ENCODE measurements at regions of chr4 and their contacts with region 1.

Region 1: DNA sequence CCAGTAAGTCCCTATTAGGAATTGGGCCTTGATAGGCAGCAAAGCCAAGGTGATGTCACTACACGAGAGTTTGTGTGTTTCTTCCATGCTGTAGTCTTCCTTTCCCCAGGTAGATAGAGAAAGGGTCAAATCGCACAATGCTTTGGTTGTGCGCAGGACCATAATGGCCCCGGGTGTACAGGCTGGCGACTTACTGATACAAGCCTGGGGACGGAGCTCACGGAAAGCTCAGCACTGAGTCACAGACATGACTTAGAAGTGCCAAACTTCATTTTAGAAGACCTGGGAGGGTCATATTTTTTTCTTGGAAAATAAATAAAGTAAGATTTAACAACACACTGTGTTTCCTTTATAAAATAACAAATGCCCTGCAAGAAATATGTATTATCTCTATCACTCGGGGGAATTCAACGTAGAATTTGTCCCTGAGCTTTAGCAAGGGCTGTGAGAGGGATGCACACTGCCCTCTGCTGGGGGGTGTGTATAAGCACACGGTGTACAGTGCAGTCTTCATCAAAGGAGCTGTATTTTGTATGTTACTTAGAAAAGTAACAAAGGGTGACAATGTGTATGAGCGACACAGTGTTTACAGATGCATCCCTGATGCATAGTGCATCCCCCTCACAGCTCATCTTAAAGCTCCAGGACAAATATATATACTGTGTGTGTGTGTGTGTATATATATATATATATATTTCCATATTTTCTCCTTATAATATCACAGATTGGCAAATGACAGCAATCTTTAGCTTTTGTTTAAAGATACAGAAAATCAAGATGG is 254.5 kb upstream of the VEGFC start:
- DNase-seq: peak; percentile 76
- H3K4me3 ChIP-seq: no peak overlapping the region
- H3K27ac ChIP-seq: no peak overlapping the region
- H3K4me1 ChIP-seq: peaks cover 3% of the 10 kb centered on the region
- H3K27me3 ChIP-seq: no peaks in the 10 kb centered on the region
- CTCF ChIP-seq: peak; percentile 77 to 90
- POLR2A ChIP-seq: no peak

Region 2: GRCh38 chr4:176635372-176636261 is 411.6 kb before region 1 on chr4:
- CTCF ChIA-PET with region 1: interaction called, 11 read pairs
- POLR2A ChIA-PET with region 1: no interaction called
- dilution Hi-C with region 1: no loop called
- intact Hi-C with region 1: loop called (anchors 10 kb)
- DNase-seq: peak; percentile 68
- H3K4me3 ChIP-seq: no peak overlapping the region
- H3K27ac ChIP-seq: peak overlapping the region; percentile 20
- H3K4me1 ChIP-seq: peaks cover 7% of the 10 kb centered on the region
- H3K27me3 ChIP-seq: no peaks in the 10 kb centered on the region
- CTCF ChIP-seq: no peak
- POLR2A ChIP-seq: no peak

Region 3: GRCh38 chr4:176778491-176778890 is 268.8 kb before region 1 on chr4:
- CTCF ChIA-PET with region 1: interaction called, 27 read pairs
- POLR2A ChIA-PET with region 1: no interaction called
- dilution Hi-C with region 1: no loop called
- intact Hi-C with region 1: no loop called
- DNase-seq: peak; percentile 64
- H3K4me3 ChIP-seq: no peak overlapping the region
- H3K27ac ChIP-seq: peak overlapping the region; percentile 80
- H3K4me1 ChIP-seq: peaks cover 52% of the 10 kb centered on the region
- H3K27me3 ChIP-seq: no peaks in the 10 kb centered on the region
- CTCF ChIP-seq: no peak
- POLR2A ChIP-seq: no peak

Region 4: DNA sequence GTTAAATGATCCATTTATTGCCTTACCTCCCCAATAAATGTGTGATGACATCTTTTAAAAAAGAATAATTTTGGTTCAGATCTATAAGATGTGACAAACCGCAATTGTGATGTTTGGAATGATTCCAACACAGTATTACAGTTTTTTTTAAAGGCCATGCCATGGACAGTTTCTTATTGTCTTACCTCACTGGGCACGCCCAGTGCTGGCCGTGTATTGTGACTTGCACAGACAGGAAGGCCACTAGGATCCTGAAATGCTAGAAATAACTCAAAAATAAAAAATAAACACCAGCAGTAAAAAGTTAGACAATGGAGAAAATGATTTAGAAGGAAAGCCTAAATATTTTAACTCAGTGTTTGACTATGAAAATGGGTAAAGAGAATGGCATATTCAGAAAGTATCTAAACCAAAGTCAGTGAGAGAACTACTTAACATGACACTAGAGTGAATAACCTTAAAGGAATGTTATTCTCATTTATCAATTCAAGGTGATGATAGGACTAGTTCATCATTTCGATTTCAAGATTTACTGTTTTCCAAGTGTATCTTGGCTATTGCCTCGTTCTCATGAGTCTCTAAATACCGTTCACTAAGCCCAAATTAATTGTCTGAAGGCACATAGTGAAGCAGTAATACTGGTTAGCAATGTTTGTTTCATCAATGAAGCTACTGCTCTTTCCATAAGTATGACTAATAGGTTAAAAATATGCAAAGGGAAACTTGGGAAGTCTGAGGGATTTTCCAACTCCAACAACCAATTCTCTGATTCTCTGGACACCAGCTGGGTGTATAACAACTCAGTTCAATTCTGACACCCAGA is 208.4 kb before region 1 on chr4:
- CTCF ChIA-PET with region 1: interaction called, 12 read pairs
- POLR2A ChIA-PET with region 1: no interaction called
- dilution Hi-C with region 1: no loop called
- intact Hi-C with region 1: loop called (anchors 2 kb)
- DNase-seq: peak; percentile 77
- H3K4me3 ChIP-seq: no peak overlapping the region
- H3K27ac ChIP-seq: peak overlapping the region; percentile 71
- H3K4me1 ChIP-seq: peaks cover 74% of the 10 kb centered on the region
- H3K27me3 ChIP-seq: no peaks in the 10 kb centered on the region
- CTCF ChIP-seq: no peak
- POLR2A ChIP-seq: no peak

Region 5: GRCh38 chr4:176920694-176921093 is 126.6 kb before region 1 on chr4:
- CTCF ChIA-PET with region 1: interaction called, 16 read pairs
- POLR2A ChIA-PET with region 1: interaction called, 3 read pairs
- dilution Hi-C with region 1: no loop called
- intact Hi-C with region 1: loop called (anchors 1 kb)
- DNase-seq: peak; percentile 91
- H3K4me3 ChIP-seq: peak overlapping the region in 1 of 3 experiments; percentile 41
- H3K27ac ChIP-seq: peak overlapping the region; percentile 66
- H3K4me1 ChIP-seq: peaks cover 43% of the 10 kb centered on the region
- H3K27me3 ChIP-seq: no peaks in the 10 kb centered on the region
- CTCF ChIP-seq: no peak
- POLR2A ChIP-seq: no peak

Region 6: DNA sequence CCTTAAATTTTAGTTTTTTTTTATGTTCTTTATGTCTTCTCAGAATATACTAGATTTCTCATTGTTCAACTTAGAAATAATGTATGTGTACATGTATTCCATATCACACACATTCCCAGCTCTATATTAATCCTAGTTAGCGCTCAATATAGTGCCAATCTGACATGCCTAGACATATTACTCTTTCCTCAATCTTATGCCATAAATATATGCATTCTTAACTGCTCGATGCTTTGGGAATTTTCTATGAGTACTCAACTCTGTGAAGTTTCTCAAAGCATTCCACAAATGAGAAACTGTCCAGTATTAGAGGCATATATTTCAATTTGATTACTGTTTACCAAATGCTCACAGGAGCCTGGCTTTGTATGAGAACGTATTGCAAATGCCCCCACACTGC is 23.3 kb before region 1 on chr4:
- CTCF ChIA-PET with region 1: interaction called, 14 read pairs
- POLR2A ChIA-PET with region 1: no interaction called
- dilution Hi-C with region 1: no loop called
- intact Hi-C with region 1: no loop called
- DNase-seq: no peak
- H3K4me3 ChIP-seq: no peak overlapping the region
- H3K27ac ChIP-seq: no peak overlapping the region
- H3K4me1 ChIP-seq: no peaks in the 10 kb centered on the region
- H3K27me3 ChIP-seq: no peaks in the 10 kb centered on the region
- CTCF ChIP-seq: no peak
- POLR2A ChIP-seq: no peak

Region 7: DNA sequence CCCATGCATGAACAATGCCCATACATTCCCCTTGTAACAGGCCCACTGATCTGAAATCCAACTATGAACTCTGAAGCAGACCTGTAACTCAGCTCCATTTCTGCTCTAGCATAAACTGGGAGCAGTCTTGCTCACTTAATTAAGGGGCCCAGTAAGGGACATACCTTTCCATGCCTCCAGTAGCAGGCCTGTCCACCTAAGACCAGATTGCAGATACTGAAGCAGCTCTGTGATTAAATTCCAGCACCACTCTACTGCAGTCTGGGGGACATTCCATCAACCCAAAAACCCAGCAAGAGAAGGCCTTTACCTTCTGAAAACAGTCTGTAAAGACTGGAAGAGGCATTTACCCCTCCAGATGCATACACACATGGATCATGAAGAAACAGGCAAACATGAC is 100.4 kb after region 1 on chr4:
- CTCF ChIA-PET with region 1: no interaction called
- POLR2A ChIA-PET with region 1: no interaction called
- dilution Hi-C with region 1: no loop called
- intact Hi-C with region 1: no loop called
- DNase-seq: no peak
- H3K4me3 ChIP-seq: no peak overlapping the region
- H3K27ac ChIP-seq: no peak overlapping the region
- H3K4me1 ChIP-seq: no peaks in the 10 kb centered on the region
- H3K27me3 ChIP-seq: no peaks in the 10 kb centered on the region
- CTCF ChIP-seq: no peak
- POLR2A ChIP-seq: no peak

Region 8: DNA sequence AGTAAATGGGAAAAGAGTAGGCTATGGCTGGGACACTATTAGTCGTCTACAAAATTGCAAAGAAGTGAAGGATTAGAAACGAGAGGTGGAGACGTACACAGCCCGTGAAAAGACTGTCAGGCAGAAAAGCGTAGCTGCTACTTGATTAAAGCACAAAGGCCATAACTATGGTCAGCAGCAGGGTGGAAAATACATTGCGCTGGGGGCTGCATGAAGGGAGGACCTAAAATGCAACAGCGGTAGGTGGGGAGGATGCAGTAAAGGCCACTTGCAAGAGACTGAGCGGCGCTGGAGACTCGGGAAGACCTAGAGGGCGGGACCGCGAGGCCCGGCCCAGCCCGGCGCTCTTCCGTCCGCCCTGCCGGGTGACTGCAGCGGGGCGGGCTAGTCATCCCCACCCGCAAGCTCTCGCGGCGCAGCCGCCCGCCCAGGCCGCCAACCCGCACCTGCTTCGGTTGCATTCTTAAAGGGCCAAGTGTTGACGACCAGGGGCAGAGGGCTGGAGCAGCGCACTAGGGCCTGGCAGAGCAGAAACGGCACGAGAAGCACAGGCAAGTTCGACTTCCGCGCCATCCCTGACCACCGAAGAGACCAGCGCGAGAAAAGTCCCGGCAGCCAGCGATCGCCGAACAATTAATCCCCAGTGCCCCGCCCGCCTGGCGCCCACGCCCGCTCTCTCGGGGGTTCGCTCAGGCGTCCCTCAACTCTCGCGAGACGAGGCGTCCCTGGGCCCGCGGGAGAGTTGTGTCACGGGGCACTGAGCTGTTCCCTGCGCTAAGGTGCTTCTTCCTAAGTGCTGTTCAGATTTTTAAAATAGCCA is 394.8 kb after region 1 on chr4 and contains the start of gene AGA:
- CTCF ChIA-PET with region 1: interaction called, 5 read pairs
- POLR2A ChIA-PET with region 1: no interaction called
- dilution Hi-C with region 1: no loop called
- intact Hi-C with region 1: loop called (anchors 5 kb)
- DNase-seq: peak; percentile 94
- H3K4me3 ChIP-seq: peak within 1 kb of the TSS; percentile 49 to 91 (median 77)
- H3K27ac ChIP-seq: peak within 1 kb of the TSS; percentile 96
- H3K4me1 ChIP-seq: peaks cover 13% of the 10 kb centered on the region
- H3K27me3 ChIP-seq: no peaks in the 10 kb centered on the region
- CTCF ChIP-seq: no peak
- POLR2A ChIP-seq: peak; percentile 95
- total RNA-seq, gene AGA: 16.7 and 16.9 TPM in 2 replicates

Region 9: GRCh38 chr4:178244785-178245184 is 1197.5 kb after region 1 on chr4:
- CTCF ChIA-PET with region 1: no interaction called
- POLR2A ChIA-PET with region 1: no interaction called
- dilution Hi-C with region 1: no loop called
- intact Hi-C with region 1: no loop called
- DNase-seq: no peak
- H3K4me3 ChIP-seq: no peak overlapping the region
- H3K27ac ChIP-seq: no peak overlapping the region
- H3K4me1 ChIP-seq: no peaks in the 10 kb centered on the region
- H3K27me3 ChIP-seq: no peaks in the 10 kb centered on the region
- CTCF ChIP-seq: no peak
- POLR2A ChIP-seq: no peak

Measured in endothelial cell of umbilical vein (primary cell).